ENCODE measurements at regions of chr11 and their contacts with region 1.

Region 1: DNA sequence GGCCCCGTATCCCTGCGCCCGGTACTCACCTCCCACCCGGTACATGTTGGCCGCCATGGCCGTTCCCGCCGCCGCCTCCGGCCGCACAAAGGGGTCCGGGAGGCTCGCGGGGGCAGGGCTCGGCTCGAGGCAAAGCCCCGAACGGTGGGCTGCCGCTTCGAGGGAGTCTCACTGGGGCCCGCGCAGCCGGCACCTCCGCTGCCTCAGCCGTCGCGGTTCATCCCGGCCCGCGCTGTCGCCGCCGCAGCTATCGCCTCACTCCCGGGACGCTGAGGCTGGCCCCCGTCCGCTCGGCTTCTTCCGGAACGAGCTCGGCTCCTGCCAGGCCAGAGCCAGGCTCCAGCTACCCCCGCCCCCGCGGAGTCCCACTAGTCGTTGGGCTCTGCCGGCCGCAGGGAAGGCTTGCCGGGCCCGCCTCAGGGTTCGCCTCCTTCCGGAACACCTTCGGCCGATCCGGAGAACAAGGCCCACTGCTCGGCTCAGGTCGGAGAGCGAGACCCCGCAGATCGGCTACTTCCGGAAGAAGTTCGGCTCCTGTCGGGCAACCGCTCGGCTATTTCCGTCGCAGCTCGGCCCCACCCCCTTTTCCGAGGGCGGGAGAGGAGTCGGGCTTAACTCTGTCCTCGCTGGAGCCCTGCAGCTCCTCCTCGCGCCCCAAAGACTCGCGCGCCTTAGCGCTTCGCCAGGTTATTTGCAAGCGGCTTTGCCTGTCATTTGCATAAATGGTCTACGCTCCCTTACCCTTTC is at the start of gene MTA2:
- DNase-seq: peak; percentile 87
- ATAC-seq: peak; percentile 92
- H3K4me3 ChIP-seq: peak within 1 kb of the TSS; percentile 91
- H3K27ac ChIP-seq: peak within 1 kb of the TSS; percentile 97
- H3K4me1 ChIP-seq: peaks cover 19% of the 10 kb centered on the region
- H3K27me3 ChIP-seq: no peaks in the 10 kb centered on the region
- CTCF ChIP-seq: 0 out of 6 replicates have a peak, but pooled peaks of 1 of the 3 experiments have one; percentile 7
- EP300 ChIP-seq: no peak
- POLR2A ChIP-seq: peak; percentile 85
- RAD21 ChIP-seq: no peak
- polyA plus RNA-seq, gene MTA2: 6.7 to 6.8 TPM

Region 2: DNA sequence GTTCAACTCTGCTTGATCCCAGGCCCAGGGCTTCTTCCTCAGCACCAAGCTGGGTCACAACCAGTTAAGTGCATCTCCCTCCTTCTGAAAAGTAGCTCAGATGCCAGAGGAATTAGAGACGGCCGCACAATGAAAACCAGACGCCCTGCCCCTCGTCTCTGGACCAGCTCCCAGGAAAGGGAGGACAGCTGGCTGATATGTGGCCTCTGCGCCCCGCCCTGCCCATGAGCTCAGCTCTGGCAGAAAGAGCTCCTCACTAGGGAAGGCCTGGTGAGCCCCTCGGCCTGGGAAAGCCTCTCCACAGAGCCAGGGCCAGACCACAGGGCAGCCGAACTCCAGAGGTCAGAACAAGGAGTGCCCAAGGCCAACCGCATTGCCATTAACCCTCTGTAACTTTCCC is 200.8 kb before region 1 on chr11:
- CTCF ChIA-PET with region 1: no interaction called
- POLR2A ChIA-PET with region 1: no interaction called
- RAD21 ChIA-PET with region 1: no interaction called
- SMC1A ChIA-PET with region 1: no interaction called
- in situ Hi-C with region 1: no loop called
- intact Hi-C with region 1: no loop called
- DNase-seq: no peak
- ATAC-seq: no peak
- H3K4me3 ChIP-seq: no peak overlapping the region
- H3K27ac ChIP-seq: no peak overlapping the region
- H3K4me1 ChIP-seq: no peaks in the 10 kb centered on the region
- H3K27me3 ChIP-seq: no peaks in the 10 kb centered on the region
- CTCF ChIP-seq: no peak
- EP300 ChIP-seq: no peak
- POLR2A ChIP-seq: no peak
- RAD21 ChIP-seq: no peak

Region 3: DNA sequence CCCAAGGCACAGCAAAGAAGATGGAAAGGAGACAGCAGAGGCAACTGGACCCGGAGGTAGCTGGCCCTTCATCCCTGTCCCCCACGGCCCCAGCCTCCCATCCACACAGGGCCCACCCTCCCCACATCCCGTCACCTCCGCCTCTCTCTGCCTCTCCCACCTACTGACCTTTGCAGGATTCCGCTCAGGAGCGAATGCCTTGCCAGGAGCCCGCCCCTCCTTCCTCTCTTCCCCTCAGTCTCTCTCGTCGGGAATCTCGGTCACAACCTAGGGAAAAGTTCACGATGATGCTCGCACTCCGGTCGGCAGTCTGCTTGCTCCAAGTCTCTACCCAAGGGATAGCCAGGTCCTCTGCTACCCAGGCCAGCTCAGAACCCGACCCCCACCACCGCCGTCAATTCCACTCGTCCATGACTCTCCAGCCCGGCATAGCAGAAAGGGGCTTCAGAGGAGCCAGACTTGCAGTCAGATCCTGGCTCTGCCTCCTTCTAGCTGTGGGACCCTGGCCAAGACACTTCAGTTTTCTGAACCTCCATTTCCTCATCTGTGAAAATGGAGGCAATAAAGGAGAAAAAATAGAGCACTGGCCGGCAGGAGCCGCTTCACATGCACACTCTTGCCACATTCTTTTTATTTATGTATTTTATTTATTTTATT is 65.1 kb before region 1 on chr11:
- CTCF ChIA-PET with region 1: no interaction called
- POLR2A ChIA-PET with region 1: no interaction called
- RAD21 ChIA-PET with region 1: no interaction called
- SMC1A ChIA-PET with region 1: no interaction called
- in situ Hi-C with region 1: no loop called
- intact Hi-C with region 1: no loop called
- DNase-seq: no peak
- ATAC-seq: no peak
- H3K4me3 ChIP-seq: no peak overlapping the region
- H3K27ac ChIP-seq: no peak overlapping the region
- H3K4me1 ChIP-seq: peaks cover 33% of the 10 kb centered on the region
- H3K27me3 ChIP-seq: no peaks in the 10 kb centered on the region
- CTCF ChIP-seq: no peak
- EP300 ChIP-seq: no peak
- POLR2A ChIP-seq: no peak
- RAD21 ChIP-seq: no peak

Region 4: GRCh38 chr11:62612366-62613290 is 11.1 kb after region 1 on chr11 and contains the starts of genes EML3 and ROM1:
- CTCF ChIA-PET with region 1: interaction called, 27 read pairs
- POLR2A ChIA-PET with region 1: interaction called, 9 read pairs
- RAD21 ChIA-PET with region 1: interaction called, 8 read pairs
- SMC1A ChIA-PET with region 1: interaction called, 5 read pairs
- in situ Hi-C with region 1: no loop called
- intact Hi-C with region 1: no loop called
- DNase-seq: no peak
- ATAC-seq: peak; percentile 88
- H3K4me3 ChIP-seq: peak within 1 kb of the TSS; percentile 94
- H3K27ac ChIP-seq: peak within 1 kb of the TSS; percentile 81
- H3K4me1 ChIP-seq: peaks cover 12% of the 10 kb centered on the region
- H3K27me3 ChIP-seq: no peaks in the 10 kb centered on the region
- CTCF ChIP-seq: peak; percentile 76 to 99 (median 92)
- EP300 ChIP-seq: no peak
- POLR2A ChIP-seq: 0 out of 2 replicates have a peak, but pooled peaks have one; percentile 50
- RAD21 ChIP-seq: peak; percentile 36; the same call in 1 of the 2 replicates
- polyA plus RNA-seq, gene EML3: 0.58 to 1.2 TPM
- polyA plus RNA-seq, gene ROM1: 0.42 TPM

Region 5: GRCh38 chr11:62621567-62622470 is 20.3 kb after region 1 on chr11 and contains the start of gene B3GAT3:
- CTCF ChIA-PET with region 1: interaction called, 5 read pairs
- POLR2A ChIA-PET with region 1: interaction called, 15 read pairs
- RAD21 ChIA-PET with region 1: interaction called, 6 read pairs
- SMC1A ChIA-PET with region 1: interaction called, 6 read pairs
- in situ Hi-C with region 1: no loop called
- intact Hi-C with region 1: no loop called
- DNase-seq: peak; percentile 98
- ATAC-seq: peak; percentile 98
- H3K4me3 ChIP-seq: peak within 1 kb of the TSS; percentile 84
- H3K27ac ChIP-seq: peak within 1 kb of the TSS; percentile 81
- H3K4me1 ChIP-seq: 0 out of 2 replicates have a peak, but pooled peaks cover 4% of the 10 kb centered on the region
- H3K27me3 ChIP-seq: no peaks in the 10 kb centered on the region
- CTCF ChIP-seq: no peak
- EP300 ChIP-seq: peak in 1 of 2 experiments; percentile 27; a peak in 1 of 4 replicates
- POLR2A ChIP-seq: peak; percentile 84
- RAD21 ChIP-seq: no peak
- polyA plus RNA-seq, gene B3GAT3: 0.31 to 2.8 TPM

Region 6: GRCh38 chr11:62645956-62646824 is 44.6 kb after region 1 on chr11 and contains the start of gene GANAB:
- CTCF ChIA-PET with region 1: no interaction called
- POLR2A ChIA-PET with region 1: interaction called, 10 read pairs
- RAD21 ChIA-PET with region 1: interaction called, 3 read pairs
- SMC1A ChIA-PET with region 1: interaction called, 4 read pairs
- in situ Hi-C with region 1: no loop called
- intact Hi-C with region 1: no loop called
- DNase-seq: peak; percentile 82
- ATAC-seq: peak; percentile 99
- H3K4me3 ChIP-seq: peak within 1 kb of the TSS; percentile 98
- H3K27ac ChIP-seq: peak within 1 kb of the TSS; percentile 93
- H3K4me1 ChIP-seq: peaks cover 4% of the 10 kb centered on the region; the same call in 1 of the 2 replicates
- H3K27me3 ChIP-seq: no peaks in the 10 kb centered on the region
- CTCF ChIP-seq: no peak
- EP300 ChIP-seq: no peak
- POLR2A ChIP-seq: peak; percentile 94
- RAD21 ChIP-seq: no peak
- polyA plus RNA-seq, gene GANAB: 4.5 to 6.4 TPM

Region 7: DNA sequence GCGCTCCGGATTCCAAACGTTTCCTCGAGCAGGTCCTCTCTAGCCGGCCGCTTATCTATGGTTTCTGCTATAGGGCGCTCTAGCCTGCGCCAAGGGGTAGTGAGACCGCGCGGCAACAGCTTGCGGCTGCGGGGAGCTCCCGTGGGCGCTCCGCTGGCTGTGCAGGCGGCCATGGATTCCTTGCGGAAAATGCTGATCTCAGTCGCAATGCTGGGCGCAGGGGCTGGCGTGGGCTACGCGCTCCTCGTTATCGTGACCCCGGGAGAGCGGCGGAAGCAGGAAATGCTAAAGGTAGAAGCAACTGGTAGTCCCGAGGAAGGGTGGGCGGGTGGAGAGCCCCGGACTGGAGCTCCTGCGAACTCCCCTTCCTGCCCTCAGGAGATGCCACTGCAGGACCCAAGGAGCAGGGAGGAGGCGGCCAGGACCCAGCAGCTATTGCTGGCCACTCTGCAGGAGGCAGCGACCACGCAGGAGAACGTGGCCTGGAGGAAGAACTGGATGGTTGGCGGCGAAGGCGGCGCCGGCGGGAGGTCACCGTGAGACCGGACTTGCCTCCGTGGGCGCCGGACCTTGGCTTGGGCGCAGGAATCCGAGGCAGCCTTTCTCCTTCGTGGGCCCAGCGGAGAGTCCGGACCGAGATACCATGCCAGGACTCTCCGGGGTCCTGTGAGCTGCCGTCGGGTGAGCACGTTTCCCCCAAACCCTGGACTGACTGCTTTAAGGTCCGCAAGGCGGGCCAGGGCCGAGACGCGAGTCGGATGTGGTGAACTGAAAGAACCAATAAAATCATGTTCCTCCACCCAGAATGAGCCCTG is 70.2 kb after region 1 on chr11 and contains the starts of genes LBHD1 and UQCC3:
- CTCF ChIA-PET with region 1: interaction called, 3 read pairs
- POLR2A ChIA-PET with region 1: interaction called, 12 read pairs
- RAD21 ChIA-PET with region 1: interaction called, 6 read pairs
- SMC1A ChIA-PET with region 1: interaction called, 3 read pairs
- in situ Hi-C with region 1: no loop called
- intact Hi-C with region 1: no loop called
- DNase-seq: no peak
- ATAC-seq: peak; percentile 89
- H3K4me3 ChIP-seq: peak within 1 kb of the TSS; percentile 88
- H3K27ac ChIP-seq: peak within 1 kb of the TSS; percentile 75
- H3K4me1 ChIP-seq: peaks cover 19% of the 10 kb centered on the region
- H3K27me3 ChIP-seq: no peaks in the 10 kb centered on the region
- CTCF ChIP-seq: no peak
- EP300 ChIP-seq: no peak
- POLR2A ChIP-seq: peak; percentile 82
- RAD21 ChIP-seq: no peak
- polyA plus RNA-seq, gene LBHD1: 0.79 to 2.4 TPM
- polyA plus RNA-seq, gene UQCC3: 2.0 to 4.6 TPM

Measured in GM12878 (cell line).